Activated CD8-positive, alpha-beta T cell treated with anti-CD3 and anti-CD28 coated beads for 36 hours (primary cell): ENCODE measurements at regions of chr1 and their contacts with region 1.

Region 1: GRCh38 chr1:7942214-7942921 is 1.7 kb upstream of the TNFRSF9 start:
- DNase-seq: peak; percentile 53
- ATAC-seq: peak; percentile 18
- H3K4me3 Mint-ChIP-seq: peak overlapping the region; percentile 87
- H3K27ac Mint-ChIP-seq: peak overlapping the region; percentile 97
- H3K4me1 Mint-ChIP-seq: peaks cover 50% of the 10 kb centered on the region
- H3K27me3 Mint-ChIP-seq: no peaks in the 10 kb centered on the region
- CTCF ChIP-seq: no peak

Region 2: DNA sequence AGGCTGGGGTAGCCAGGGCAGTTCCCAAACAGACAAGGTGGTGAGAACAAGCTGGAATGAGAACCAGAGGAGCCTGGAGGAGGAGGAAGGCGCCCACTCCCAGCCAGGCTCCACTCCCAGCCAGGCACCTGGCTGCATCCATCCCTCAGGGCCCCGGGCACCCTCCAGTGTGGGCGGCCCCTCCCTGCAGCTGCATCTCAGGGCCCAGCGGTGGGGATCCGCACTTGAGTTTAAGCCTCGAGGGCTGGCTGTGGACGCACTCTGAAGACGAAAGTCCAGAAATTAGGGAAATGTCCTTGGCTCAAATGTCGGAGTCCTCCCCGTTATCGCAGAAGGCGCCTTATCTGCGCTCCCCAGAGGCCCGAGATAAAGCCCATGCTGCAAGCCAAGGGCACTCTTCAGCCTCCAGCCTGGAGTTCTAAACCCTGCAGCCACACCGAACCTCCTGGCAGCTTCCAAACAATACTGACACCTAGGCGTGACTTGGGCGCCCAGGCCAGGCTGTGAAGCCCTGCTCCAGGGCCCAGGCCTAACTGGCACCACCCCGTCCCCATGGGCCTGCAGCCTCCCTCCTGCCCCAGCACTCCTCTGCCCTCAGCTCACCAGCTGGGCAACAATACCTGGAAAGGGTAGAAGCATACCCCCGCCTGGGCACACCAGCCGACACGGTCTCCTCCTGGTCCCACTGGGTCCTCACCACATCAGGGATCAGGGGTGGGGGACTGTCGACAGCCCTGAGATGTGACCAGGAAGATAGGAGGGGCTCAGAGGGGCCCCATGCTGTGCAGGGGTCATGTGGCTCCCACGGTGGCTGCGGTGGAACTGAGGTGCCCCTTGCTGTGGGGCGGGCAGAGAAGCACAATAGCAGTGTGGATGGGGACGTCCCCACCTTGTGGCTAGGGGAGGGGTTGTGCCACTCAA is 356.1 kb before region 1 on chr1:
- CTCF ChIA-PET with region 1: no interaction called
- POLR2A ChIA-PET with region 1: no interaction called
- intact Hi-C with region 1: no loop called
- DNase-seq: no peak
- ATAC-seq: no peak
- H3K4me3 Mint-ChIP-seq: no peak overlapping the region
- H3K27ac Mint-ChIP-seq: no peak overlapping the region
- H3K4me1 Mint-ChIP-seq: no peaks in the 10 kb centered on the region
- H3K27me3 Mint-ChIP-seq: no peaks in the 10 kb centered on the region
- CTCF ChIP-seq: no peak

Region 3: GRCh38 chr1:7922301-7922700 is 20.1 kb before region 1 on chr1:
- CTCF ChIA-PET with region 1: interaction called, 17 read pairs
- POLR2A ChIA-PET with region 1: interaction called, 65 read pairs
- intact Hi-C with region 1: no loop called
- DNase-seq: no peak
- ATAC-seq: no peak
- H3K4me3 Mint-ChIP-seq: no peak overlapping the region
- H3K27ac Mint-ChIP-seq: peak overlapping the region; percentile 19
- H3K4me1 Mint-ChIP-seq: peaks cover 64% of the 10 kb centered on the region
- H3K27me3 Mint-ChIP-seq: no peaks in the 10 kb centered on the region
- CTCF ChIP-seq: no peak

Region 4: DNA sequence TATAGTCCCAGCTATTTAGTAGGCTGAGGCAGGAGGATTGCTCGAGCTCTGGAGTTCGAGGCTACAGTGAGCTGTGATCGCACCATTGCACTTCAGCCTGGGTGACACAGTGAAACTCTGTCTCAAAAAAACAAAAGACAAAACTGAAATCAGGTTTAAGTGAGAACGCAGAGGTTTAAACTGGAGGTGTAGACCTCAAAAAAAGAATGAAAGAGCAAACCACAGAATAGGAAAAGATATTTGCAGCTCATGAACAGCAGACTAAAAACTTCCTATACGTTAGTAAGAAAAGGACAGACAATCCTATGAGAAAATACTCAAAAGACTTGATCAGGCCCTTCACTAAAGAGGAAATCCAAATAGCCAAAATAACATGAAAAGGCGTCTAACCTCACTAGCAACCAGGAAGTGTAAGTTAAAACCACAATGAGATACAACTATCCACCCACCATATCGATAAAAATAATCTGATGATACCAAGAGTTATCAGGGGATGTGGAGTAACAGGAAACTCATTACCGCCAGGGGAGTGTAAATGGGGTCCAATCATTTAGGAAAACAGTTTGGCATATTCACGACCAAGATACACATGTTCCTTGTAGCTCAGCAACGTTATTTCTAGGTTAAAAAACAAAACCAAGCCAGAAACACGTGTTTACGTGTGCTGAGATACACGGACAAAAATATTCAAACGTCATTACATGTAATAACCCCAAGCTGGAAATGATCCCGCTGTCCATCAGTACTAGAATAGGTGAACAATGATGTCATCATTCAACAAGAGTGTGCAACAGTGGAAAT is 11.5 kb before region 1 on chr1:
- CTCF ChIA-PET with region 1: interaction called, 5 read pairs
- POLR2A ChIA-PET with region 1: interaction called, 65 read pairs
- intact Hi-C with region 1: no loop called
- DNase-seq: peak; percentile 57
- ATAC-seq: peak; percentile 73
- H3K4me3 Mint-ChIP-seq: peak overlapping the region; percentile 55
- H3K27ac Mint-ChIP-seq: peak overlapping the region; percentile 93
- H3K4me1 Mint-ChIP-seq: peaks cover 79% of the 10 kb centered on the region
- H3K27me3 Mint-ChIP-seq: no peaks in the 10 kb centered on the region
- CTCF ChIP-seq: no peak

Region 5: GRCh38 chr1:7961216-7962015 is 19.0 kb after region 1 on chr1 and contains the start of gene PARK7:
- CTCF ChIA-PET with region 1: interaction called, 5 read pairs
- POLR2A ChIA-PET with region 1: interaction called, 39 read pairs
- intact Hi-C with region 1: no loop called
- DNase-seq: peak; percentile 100
- ATAC-seq: peak; percentile 96
- H3K4me3 Mint-ChIP-seq: peak within 1 kb of the TSS; percentile 98
- H3K27ac Mint-ChIP-seq: peak within 1 kb of the TSS; percentile 99
- H3K4me1 Mint-ChIP-seq: peaks cover 60% of the 10 kb centered on the region
- H3K27me3 Mint-ChIP-seq: no peaks in the 10 kb centered on the region
- CTCF ChIP-seq: peak; percentile 22
- total RNA-seq, gene PARK7: 539 to 552 TPM